Activated naive CD4-positive, alpha-beta T cell treated with anti-CD3 and anti-CD28 coated beads for 36 hours (primary cell): ENCODE measurements at regions of chr1 and their contacts with region 1.

Region 1: DNA sequence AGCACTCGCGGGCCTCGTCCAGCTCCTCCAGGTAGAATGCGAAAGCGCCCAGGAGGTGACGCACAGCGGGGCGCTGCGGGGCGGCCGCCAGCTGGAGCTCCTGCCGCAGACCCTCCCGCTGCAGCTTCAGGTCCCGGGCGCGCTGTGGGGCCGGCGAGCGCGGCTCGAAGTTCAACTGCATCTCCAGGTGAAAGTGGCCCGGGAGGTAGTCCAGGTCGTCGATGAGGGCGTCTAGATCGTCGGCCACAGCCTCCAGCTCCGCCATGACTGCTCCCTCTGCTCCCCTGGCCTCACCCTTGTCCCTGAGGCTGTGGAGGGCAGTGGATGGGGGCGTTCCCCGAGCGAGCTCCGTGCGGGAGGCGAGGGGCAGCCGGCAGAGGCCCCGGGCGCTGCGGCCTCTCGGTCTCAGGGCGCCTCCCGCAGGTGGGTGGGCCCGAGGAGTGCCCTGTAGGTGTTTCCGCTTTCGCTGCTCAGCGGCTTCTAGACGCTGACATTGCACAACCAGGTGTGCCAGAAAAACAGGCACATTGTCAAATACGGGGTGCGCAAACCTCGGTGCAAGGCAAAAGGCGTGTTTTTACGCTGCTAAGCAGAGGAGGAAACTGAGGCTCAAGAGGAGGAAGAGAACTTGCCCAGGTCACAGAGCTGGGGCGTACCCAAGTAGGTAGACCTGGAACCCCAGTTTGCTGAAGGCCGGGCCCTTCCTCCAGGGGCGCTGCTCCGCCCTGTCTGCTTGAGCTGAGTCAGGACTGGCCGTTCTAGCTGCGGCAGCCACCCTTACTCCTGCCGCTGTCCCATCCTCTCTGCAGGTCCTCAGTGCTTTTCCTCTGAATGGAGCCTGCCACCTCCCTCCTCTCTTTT is at the start of gene TTC22:
- DNase-seq: peak; percentile 86
- H3K4me3 Mint-ChIP-seq: peak within 1 kb of the TSS; percentile 90
- H3K27ac Mint-ChIP-seq: peak within 1 kb of the TSS; percentile 91
- H3K4me1 Mint-ChIP-seq: peaks cover 55% of the 10 kb centered on the region
- H3K27me3 Mint-ChIP-seq: no peaks in the 10 kb centered on the region
- total RNA-seq, gene TTC22: 6.9 to 8.6 TPM

Region 2: GRCh38 chr1:53945433-53946251 is 855.5 kb before region 1 on chr1 and contains the start of gene IFT25:
- CTCF ChIA-PET with region 1: no interaction called
- intact Hi-C with region 1: loop called (anchors 5 kb)
- DNase-seq: peak; percentile 99
- H3K4me3 Mint-ChIP-seq: peak within 1 kb of the TSS; percentile 90
- H3K27ac Mint-ChIP-seq: peak within 1 kb of the TSS; percentile 87
- H3K4me1 Mint-ChIP-seq: peaks cover 45% of the 10 kb centered on the region
- H3K27me3 Mint-ChIP-seq: no peaks in the 10 kb centered on the region
- total RNA-seq, gene IFT25: 46.2 to 48.7 TPM

Region 3: GRCh38 chr1:54277451-54278341 is 523.4 kb before region 1 on chr1:
- CTCF ChIA-PET with region 1: no interaction called
- intact Hi-C with region 1: loop called (anchors 2 kb)
- DNase-seq: no peak
- H3K4me3 Mint-ChIP-seq: peak overlapping the region; percentile 44
- H3K27ac Mint-ChIP-seq: peak overlapping the region; percentile 93
- H3K4me1 Mint-ChIP-seq: peaks cover 62% of the 10 kb centered on the region
- H3K27me3 Mint-ChIP-seq: no peaks in the 10 kb centered on the region

Region 4: GRCh38 chr1:54464482-54465146 is 336.5 kb before region 1 on chr1:
- CTCF ChIA-PET with region 1: no interaction called
- intact Hi-C with region 1: no loop called
- DNase-seq: no peak
- H3K4me3 Mint-ChIP-seq: no peak overlapping the region
- H3K27ac Mint-ChIP-seq: no peak overlapping the region
- H3K4me1 Mint-ChIP-seq: peaks cover 37% of the 10 kb centered on the region
- H3K27me3 Mint-ChIP-seq: no peaks in the 10 kb centered on the region

Region 5: DNA sequence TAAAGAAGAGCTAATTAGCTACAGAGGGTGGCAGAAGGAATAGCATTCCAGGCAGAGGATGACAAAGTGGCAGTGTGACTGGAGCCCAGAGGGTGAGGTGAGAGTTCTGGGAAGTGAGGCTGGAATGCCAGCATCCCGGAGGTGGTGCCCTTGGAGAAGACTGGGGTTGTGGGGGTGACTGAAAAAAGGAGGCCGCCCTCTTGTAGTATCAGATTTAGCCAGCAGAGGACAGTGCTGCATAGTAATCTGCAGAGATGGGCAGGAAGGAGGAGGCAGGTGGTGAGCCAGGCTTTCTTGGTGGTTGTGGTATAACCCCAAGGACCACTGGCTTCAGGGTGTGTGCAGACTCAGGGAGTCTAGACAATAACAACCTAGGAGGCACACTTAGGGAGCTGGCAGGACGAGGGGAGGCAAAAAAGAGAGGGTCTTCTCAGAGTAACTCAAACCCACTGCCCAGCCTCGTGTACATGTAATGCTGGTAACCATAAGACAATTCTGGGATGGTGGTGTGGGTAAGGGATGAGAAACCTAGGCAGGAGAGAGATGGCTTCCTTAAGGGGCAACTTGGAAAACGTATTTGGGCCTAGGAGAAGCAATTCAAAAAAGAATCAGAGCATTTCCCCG is 129.0 kb before region 1 on chr1:
- CTCF ChIA-PET with region 1: interaction called, 8 read pairs
- intact Hi-C with region 1: loop called (anchors 2 kb)
- DNase-seq: peak; percentile 84
- H3K4me3 Mint-ChIP-seq: no peak overlapping the region
- H3K27ac Mint-ChIP-seq: no peak overlapping the region
- H3K4me1 Mint-ChIP-seq: no peaks in the 10 kb centered on the region
- H3K27me3 Mint-ChIP-seq: no peaks in the 10 kb centered on the region

Region 6: DNA sequence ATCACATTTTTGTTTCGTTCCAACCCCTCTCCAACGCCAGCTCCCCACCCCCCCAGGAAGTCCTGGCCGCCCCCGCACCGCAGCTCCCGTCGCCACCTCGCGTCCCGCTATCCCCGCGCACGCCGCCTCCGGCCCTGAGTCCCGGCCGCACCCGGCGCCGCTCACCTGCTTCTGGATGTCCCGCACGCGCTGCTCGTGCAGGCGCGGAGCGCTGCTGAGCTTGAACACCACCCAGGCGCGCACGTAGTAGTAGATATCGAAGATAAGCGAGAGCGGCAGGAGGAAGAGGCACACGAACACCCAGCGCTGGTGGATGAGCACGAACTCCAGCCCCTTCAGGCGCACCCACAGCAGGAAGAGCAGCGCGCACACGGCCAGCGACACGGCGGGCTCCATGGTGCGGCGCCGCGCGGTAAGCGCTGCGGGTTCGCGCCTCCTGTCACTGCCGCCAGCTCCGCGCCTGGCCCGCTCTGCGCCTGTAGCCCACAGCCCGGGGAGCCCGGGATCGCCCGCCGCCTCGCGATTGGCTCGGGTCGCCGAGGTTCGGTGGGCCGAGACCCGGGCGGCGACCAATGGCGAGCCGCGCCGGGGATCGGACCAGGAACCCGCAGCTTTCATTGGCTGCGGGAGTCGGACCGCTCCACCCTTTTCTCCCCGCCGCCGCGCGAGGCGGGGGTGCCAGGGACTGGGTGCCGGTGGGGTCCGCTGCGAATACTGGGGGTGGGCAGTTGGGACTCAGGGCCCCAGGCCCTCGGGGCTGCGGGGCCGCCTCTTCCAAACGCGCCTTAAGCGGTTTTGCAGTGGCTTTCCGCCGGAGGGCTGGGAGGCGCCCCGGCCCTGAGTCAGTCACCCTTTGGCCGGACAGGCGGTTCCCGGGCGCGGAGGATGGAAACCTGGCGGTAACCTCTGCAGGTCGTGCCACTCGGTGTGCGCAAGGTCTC is 85.9 kb after region 1 on chr1 and contains the start of gene DHCR24:
- CTCF ChIA-PET with region 1: interaction called, 3 read pairs
- intact Hi-C with region 1: loop called (anchors 5 kb)
- DNase-seq: peak; percentile 75
- H3K4me3 Mint-ChIP-seq: peak within 1 kb of the TSS; percentile 93
- H3K27ac Mint-ChIP-seq: peak within 1 kb of the TSS; percentile 80
- H3K4me1 Mint-ChIP-seq: peaks cover 31% of the 10 kb centered on the region
- H3K27me3 Mint-ChIP-seq: peaks cover 11% of the 10 kb centered on the region
- total RNA-seq, gene DHCR24: 56.3 to 64.8 TPM